ENCODE measurements at regions of chr1 and their contacts with region 1.

Region 1: GRCh38 chr1:113140588-113141446 is 67.8 kb downstream of the LRIG2 start:
- DNase-seq: peak; percentile 30 to 66 (median 45)
- H3K4me3 ChIP-seq: peak overlapping the region; percentile 34 to 74 (median 42)
- H3K4me3 Mint-ChIP-seq: peak overlapping the region; percentile 79 to 93
- H3K27ac ChIP-seq: peak overlapping the region; percentile 15 to 77
- H3K27ac Mint-ChIP-seq: peak overlapping the region in 6 of 7 donors; percentile 68 to 86 (median 82)
- H3K4me1 ChIP-seq: peaks cover 25 to 30% of the 10 kb centered on the region in 2 donors
- H3K4me1 Mint-ChIP-seq: peaks cover 32% of the 10 kb centered on the region
- H3K27me3 ChIP-seq: no peaks in the 10 kb centered on the region
- H3K27me3 Mint-ChIP-seq: peaks cover 0 to 3% (median 2%) of the 10 kb centered on the region in 3 donors
- CTCF ChIP-seq: peak; percentile 84

Region 2: DNA sequence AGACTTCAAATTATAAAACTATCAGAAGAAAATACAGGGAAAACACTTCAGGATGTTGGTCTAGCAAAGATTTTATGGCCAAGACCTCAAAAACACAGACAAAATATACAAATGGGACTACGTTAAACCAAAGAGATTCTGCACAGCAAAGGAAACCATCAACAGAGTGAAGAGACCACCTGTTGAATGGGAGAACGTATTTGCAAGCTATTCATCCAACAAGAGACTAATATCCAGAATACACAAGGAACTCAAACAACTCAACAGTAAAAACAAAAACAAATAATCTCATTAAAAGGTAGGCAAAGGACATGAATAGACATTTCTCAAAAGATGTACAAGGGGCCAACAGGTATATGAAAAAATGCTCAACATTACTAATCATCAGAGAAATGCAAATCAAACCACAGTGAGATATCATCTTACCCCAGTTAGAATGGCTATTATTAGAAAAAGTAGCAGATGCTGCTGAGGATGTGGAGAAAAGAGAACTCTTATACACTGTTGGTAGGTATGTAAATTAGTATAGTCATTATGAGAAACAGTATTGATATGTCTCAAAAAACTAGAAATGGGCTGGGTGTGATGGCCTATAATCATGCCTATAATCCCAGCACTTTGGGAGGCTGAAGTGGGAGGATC is 44.8 kb after region 1 on chr1:
- intact Hi-C with region 1: no loop called
- DNase-seq: no peak
- H3K4me3 ChIP-seq: no peak overlapping the region
- H3K4me3 Mint-ChIP-seq: no peak overlapping the region
- H3K27ac ChIP-seq: no peak overlapping the region
- H3K27ac Mint-ChIP-seq: no peak overlapping the region
- H3K4me1 ChIP-seq: no peaks in the 10 kb centered on the region
- H3K4me1 Mint-ChIP-seq: no peaks in the 10 kb centered on the region
- H3K27me3 ChIP-seq: no peaks in the 10 kb centered on the region
- H3K27me3 Mint-ChIP-seq: peaks cover 2 to 15% (median 4%) of the 10 kb centered on the region in 3 donors
- CTCF ChIP-seq: no peak

Region 3: DNA sequence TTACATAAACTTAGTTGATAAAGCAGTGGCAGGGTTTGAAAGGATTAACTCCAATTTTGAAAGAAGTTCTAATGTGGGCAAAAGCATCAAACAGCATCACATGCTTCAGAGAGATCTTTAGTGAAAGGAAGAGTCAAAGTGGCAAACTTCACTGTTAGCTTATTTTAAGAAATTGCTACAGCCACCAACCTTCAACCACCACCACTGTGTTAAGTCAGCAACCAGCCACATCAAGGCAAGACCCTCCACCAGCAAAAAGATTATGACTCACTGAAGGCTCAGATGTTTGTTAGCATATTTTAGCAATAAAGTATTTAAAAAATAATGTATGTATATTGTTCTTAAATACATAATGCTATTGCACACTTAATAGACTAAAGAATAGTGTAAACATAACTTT is 228.2 kb after region 1 on chr1:
- intact Hi-C with region 1: no loop called
- DNase-seq: no peak
- H3K4me3 ChIP-seq: no peak overlapping the region
- H3K4me3 Mint-ChIP-seq: no peak overlapping the region
- H3K27ac ChIP-seq: no peak overlapping the region
- H3K27ac Mint-ChIP-seq: no peak overlapping the region
- H3K4me1 ChIP-seq: no peaks in the 10 kb centered on the region
- H3K4me1 Mint-ChIP-seq: no peaks in the 10 kb centered on the region
- H3K27me3 ChIP-seq: peaks cover 0 to 2% of the 10 kb centered on the region in 2 donors
- H3K27me3 Mint-ChIP-seq: peaks cover 0 to 4% (median 2%) of the 10 kb centered on the region in 3 donors
- CTCF ChIP-seq: no peak

Region 4: GRCh38 chr1:113396585-113396984 is 255.8 kb after region 1 on chr1:
- intact Hi-C with region 1: no loop called
- DNase-seq: no peak
- H3K4me3 ChIP-seq: no peak overlapping the region
- H3K4me3 Mint-ChIP-seq: peak overlapping the region in 1 of 2 donors; percentile 39
- H3K27ac ChIP-seq: no peak overlapping the region
- H3K27ac Mint-ChIP-seq: no peak overlapping the region
- H3K4me1 ChIP-seq: peaks cover 2 to 4% of the 10 kb centered on the region in 2 donors
- H3K4me1 Mint-ChIP-seq: peaks cover 8% of the 10 kb centered on the region
- H3K27me3 ChIP-seq: peaks cover 63 to 66% of the 10 kb centered on the region in 2 donors
- H3K27me3 Mint-ChIP-seq: peaks cover 43 to 55% (median 47%) of the 10 kb centered on the region in 3 donors
- CTCF ChIP-seq: no peak

Region 5: GRCh38 chr1:113467991-113468390 is 327.2 kb after region 1 on chr1:
- intact Hi-C with region 1: no loop called
- DNase-seq: no peak
- H3K4me3 ChIP-seq: no peak overlapping the region
- H3K4me3 Mint-ChIP-seq: no peak overlapping the region
- H3K27ac ChIP-seq: no peak overlapping the region
- H3K27ac Mint-ChIP-seq: no peak overlapping the region
- H3K4me1 ChIP-seq: no peaks in the 10 kb centered on the region
- H3K4me1 Mint-ChIP-seq: no peaks in the 10 kb centered on the region
- H3K27me3 ChIP-seq: no peaks in the 10 kb centered on the region
- H3K27me3 Mint-ChIP-seq: peaks cover 0 to 3% (median 2%) of the 10 kb centered on the region in 3 donors
- CTCF ChIP-seq: no peak

Region 6: DNA sequence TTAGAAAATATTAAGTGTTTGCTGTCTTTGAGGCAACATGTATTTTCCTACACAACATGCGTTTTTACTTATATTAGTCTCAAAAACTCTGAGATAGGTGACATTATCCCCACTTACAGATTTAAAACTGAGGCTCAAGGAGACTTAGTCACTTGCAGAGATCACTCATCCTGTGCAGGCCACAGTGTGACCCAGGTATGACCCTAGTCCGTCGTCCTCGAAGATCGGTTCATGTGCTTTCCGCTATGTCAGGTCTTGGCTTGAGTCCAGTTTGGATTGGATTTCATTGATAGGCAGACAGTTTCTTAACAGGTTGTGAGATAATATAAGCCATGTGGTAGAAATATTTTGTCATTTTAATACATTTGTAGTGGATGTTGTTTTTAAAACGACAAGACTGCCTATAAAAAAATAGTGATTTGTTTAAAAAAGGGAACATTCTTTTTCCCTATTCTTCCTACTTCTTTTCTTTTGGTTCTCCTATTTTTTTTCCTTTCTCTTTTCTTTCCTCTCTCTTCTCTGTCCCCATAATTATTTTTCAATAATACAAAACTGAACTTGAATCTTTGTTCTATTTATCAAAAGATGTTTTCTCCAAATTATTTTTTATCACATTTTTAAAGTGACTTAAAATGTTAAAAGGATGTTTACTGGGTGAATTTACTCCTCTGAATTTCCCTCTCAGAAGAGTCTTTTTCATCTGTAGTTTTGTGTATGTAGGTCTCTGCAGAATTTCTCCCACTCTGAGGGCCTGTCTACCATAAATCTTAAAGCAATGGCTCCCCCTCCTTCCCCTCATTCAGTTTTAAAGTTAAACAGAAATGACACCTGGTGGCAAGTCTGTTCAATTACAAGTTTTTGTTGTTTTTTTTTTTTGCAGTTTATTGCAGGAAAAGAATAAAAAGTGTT is 536.7 kb after region 1 on chr1:
- intact Hi-C with region 1: loop called (anchors 5 to 10 kb)
- DNase-seq: peak; percentile 15 to 39 (median 30)
- H3K4me3 ChIP-seq: no peak overlapping the region
- H3K4me3 Mint-ChIP-seq: no peak overlapping the region
- H3K27ac ChIP-seq: no peak overlapping the region
- H3K27ac Mint-ChIP-seq: no peak overlapping the region
- H3K4me1 ChIP-seq: peaks cover 10 to 14% of the 10 kb centered on the region in 2 donors
- H3K4me1 Mint-ChIP-seq: peaks cover 22% of the 10 kb centered on the region
- H3K27me3 ChIP-seq: no peaks in the 10 kb centered on the region
- H3K27me3 Mint-ChIP-seq: peaks cover 0 to 4% (median 2%) of the 10 kb centered on the region in 3 donors
- CTCF ChIP-seq: peak; percentile 72

Region 7: DNA sequence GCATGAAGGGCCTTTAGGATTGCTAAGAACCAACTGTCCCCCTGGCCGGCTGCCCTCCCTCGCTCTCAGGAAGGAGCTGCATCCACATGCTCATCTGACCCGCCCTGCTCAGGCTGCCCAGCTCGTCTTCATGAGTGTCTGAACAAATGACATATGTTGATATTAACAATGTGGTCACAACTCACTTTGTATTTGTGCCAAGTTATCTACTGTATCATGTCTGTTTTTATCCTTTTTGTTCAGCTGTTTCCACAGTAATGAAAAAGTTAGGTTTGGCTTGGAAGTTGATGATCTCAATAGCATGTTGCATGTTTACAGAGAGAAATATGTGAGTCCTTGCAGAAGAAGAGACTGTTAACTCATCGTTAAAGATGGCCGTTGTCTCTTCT is 543.3 kb after region 1 on chr1:
- intact Hi-C with region 1: loop called (anchors 5 to 10 kb)
- DNase-seq: no peak
- H3K4me3 ChIP-seq: no peak overlapping the region
- H3K4me3 Mint-ChIP-seq: peak overlapping the region in 1 of 2 donors; percentile 42
- H3K27ac ChIP-seq: no peak overlapping the region
- H3K27ac Mint-ChIP-seq: peak overlapping the region in 2 of 7 donors; percentile 42 to 56
- H3K4me1 ChIP-seq: peaks cover 12 to 13% of the 10 kb centered on the region in 2 donors
- H3K4me1 Mint-ChIP-seq: peaks cover 14% of the 10 kb centered on the region
- H3K27me3 ChIP-seq: no peaks in the 10 kb centered on the region
- H3K27me3 Mint-ChIP-seq: peaks cover 0 to under 1% (median 0%) of the 10 kb centered on the region in 3 donors
- CTCF ChIP-seq: no peak